A549 (cell line): ENCODE measurements at regions of chr14 and their contacts with region 1.

Region 1: DNA sequence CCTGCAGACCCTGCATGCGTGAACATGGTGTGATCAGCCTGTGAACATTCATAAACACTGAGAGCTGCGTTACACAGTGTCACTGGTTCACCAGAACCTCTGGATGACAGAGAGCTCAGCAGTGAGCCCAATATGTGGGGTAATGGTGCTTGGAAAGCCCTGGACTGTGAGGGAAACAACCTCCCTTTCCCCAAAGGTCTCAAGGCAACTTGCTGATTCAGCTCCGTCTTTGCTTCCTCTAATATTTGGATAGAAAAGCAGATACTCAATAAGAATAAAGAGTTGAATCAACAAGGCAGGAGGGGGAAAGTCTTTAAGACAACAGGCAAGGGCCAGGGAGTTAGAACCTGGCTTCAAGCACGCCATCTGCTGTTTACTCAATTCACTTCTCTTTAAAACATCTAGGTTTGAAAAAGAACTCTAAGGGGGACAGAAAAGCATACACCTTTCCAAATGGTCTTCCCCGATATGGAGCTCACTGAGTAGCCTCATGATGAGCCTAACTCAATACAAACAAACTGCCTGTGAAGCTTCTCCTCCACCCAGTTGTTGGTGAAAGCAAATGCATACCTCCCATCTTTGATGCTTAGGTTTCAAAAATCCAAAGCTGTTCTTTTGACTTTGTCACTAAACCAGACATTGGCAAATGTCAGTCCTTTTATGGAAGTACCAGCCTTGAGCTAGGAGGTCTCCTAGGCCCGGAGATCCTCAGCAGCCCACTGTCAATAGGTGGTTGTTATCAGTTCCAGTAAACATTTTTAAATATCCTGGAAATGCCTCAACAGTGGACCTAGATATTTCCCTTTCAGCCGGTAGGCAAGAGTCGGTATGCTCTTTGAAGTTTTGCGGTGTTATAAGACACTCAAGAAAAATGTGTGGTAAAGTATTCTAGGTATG is 76.1 kb downstream of the SAMD4A start:
- DNase-seq: peak in 1 of 2 experiments; percentile 29
- ATAC-seq: peak in 1 of 2 experiments; percentile 66; a peak in 3 of 6 replicates
- H3K4me3 ChIP-seq: no peak overlapping the region
- H3K27ac ChIP-seq: 0 out of 6 replicates have a peak overlapping the region, but pooled peaks of 1 of the 2 experiments have one; percentile 2
- H3K4me1 ChIP-seq: peaks cover 10% of the 10 kb centered on the region
- CTCF ChIP-seq: peak; percentile 51
- EP300 ChIP-seq: no peak
- POLR2A ChIP-seq: no peak
- RAD21 ChIP-seq: peak; percentile 46 to 54

Region 2: GRCh38 chr14:54629635-54630360 is 13.3 kb before region 1 on chr14:
- CTCF ChIA-PET with region 1: interaction called, 24 read pairs
- POLR2A ChIA-PET with region 1: interaction called, 3 read pairs
- DNase-seq: no peak
- ATAC-seq: no peak
- H3K4me3 ChIP-seq: no peak overlapping the region
- H3K27ac ChIP-seq: no peak overlapping the region
- H3K4me1 ChIP-seq: peaks cover 10% of the 10 kb centered on the region; the same call in 2 of the 3 replicates
- CTCF ChIP-seq: no peak
- EP300 ChIP-seq: no peak
- POLR2A ChIP-seq: no peak
- RAD21 ChIP-seq: no peak

Region 3: DNA sequence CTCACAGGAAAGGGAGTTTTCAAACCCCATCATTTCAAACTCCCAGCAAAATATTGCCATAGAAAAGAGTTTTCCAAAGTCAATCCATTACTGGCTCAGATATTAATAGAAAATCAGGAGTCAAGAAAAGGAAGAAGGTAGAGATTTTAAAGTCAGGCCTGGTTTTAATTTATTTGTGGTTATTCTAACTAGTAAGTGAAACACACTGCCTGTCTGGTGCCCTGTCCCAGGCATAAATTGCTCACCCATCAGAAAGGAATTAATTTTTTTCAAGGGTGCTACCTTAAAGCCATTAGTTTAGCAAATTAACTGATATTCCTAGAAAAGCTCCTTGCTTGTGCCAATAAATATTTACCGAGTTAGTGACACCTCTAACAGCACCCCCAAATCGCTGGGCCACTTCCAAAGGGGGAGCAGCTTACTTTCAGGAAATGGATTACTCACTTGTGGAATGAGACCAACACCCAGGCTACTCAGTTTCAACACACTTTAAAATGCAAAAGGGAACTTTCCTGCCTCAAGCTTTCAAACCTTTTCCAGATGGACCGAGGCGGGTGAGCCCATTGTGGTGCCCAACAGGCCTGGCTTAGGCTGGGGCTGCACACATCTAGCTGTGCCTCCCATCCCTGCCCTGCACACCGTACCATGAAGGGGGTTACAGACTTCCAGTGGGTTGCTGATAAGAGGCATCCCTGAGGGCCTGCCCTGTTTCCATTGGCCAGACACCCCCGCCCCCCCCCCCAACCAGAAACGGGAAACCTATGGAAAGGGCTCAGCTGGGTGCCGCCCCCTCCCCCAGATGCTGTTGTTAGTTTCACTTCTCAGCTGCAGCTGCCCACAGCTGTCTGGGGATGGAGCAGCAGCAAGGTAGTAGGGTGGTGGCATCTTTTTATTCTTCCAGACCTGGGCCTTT is 41.1 kb after region 1 on chr14:
- CTCF ChIA-PET with region 1: interaction called, 11 read pairs
- POLR2A ChIA-PET with region 1: no interaction called
- DNase-seq: no peak
- ATAC-seq: peak in 1 of 2 experiments; percentile 40; a peak in 2 of 6 replicates
- H3K4me3 ChIP-seq: no peak overlapping the region
- H3K27ac ChIP-seq: peak overlapping the region; percentile 57 to 80
- H3K4me1 ChIP-seq: peaks cover 39% of the 10 kb centered on the region
- CTCF ChIP-seq: no peak
- EP300 ChIP-seq: no peak
- POLR2A ChIP-seq: no peak
- RAD21 ChIP-seq: no peak

Region 4: DNA sequence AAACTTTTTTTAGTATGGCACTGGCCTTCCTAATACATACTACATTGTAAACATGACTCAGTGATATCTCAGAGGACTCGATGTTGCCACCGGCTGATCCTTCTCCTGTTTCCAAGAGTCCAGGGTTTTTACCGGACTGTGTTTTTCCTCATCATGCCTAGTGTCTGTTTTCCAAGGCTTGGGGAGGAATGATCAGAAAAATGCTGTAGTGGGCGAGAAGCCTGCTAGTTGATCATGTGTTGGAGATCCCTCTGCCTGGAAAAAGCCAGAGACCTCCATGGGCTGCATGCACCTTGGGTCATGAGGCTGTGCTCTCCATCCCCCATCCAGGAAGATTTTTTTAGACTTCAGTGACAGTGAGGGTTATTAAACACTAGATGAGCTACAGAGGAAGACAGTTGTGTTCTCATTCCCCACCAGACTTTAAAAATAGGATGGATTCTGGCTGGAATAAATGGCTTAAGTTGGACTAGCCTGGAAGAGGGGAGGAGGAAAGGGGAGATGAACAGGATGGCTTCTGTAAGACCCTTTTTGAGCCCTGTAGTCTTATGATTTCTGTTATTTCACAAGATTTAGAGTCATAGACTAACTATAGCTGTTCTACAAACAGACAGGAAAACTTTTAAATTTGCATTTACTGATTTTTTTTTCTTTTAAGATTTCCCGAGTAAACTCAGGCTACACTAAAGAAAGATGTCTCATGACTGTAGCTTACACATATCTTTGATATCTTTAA is 69.6 kb after region 1 on chr14:
- CTCF ChIA-PET with region 1: no interaction called
- POLR2A ChIA-PET with region 1: no interaction called
- DNase-seq: no peak
- ATAC-seq: no peak
- H3K4me3 ChIP-seq: no peak overlapping the region
- H3K27ac ChIP-seq: no peak overlapping the region
- H3K4me1 ChIP-seq: 0 out of 3 replicates have a peak, but pooled peaks cover 4% of the 10 kb centered on the region
- CTCF ChIP-seq: no peak
- EP300 ChIP-seq: no peak
- POLR2A ChIP-seq: no peak
- RAD21 ChIP-seq: no peak